Natural killer cell (primary cell): ENCODE measurements at regions of chr1 and their contacts with region 1.

Region 1: DNA sequence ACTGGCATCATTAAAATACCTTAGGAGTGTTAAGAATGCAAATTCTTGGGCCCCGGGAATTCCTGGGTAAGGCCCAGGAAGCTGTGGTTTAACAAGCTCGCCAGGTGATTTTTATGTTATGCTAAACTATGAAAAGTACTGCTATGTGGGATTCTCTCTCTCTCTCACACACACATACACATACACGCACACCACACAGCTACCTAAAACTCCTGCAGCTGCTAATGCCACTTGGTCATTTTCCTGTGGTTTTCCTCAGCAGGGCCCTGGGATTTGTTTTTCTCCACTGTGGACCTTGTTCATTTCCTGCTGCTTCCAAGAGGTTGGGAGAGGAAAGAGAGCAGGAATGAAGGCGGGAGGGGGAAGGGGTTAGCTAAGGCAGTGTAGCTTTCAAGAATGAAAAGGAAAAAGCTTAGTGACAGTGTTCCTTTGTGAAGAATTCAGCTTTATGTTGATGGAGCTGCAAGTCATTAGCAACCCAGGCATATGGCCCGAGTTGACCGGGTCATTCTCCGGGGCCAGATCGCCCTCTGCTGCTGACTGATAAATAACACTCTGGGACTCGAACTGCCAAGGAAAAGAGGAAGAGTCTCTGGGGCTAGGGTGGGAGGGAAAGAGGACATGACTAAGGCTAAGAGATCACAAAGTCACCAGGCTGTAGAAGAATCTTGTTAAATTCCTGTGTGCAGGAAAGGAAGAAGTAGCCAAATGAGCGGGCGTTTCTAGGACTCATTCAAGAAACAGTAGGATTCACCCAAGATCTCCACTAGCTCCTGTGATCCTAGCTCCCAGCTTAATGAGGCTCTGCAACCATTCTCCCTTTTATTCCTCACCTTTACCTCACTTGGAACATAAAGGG is 30.5 kb upstream of the LRIG2 start:
- DNase-seq: peak in 1 of 2 donors; percentile 38
- ATAC-seq: peak; percentile 27 to 61 (median 54)
- H3K4me3 ChIP-seq: no peak overlapping the region
- H3K4me3 Mint-ChIP-seq: no peak overlapping the region
- H3K27ac ChIP-seq: no peak overlapping the region
- H3K27ac Mint-ChIP-seq: peak overlapping the region; percentile 61 to 73
- H3K4me1 ChIP-seq: peaks cover 34% of the 10 kb centered on the region
- H3K4me1 Mint-ChIP-seq: peaks cover 36 to 45% of the 10 kb centered on the region in 2 donors
- H3K27me3 ChIP-seq: no peaks in the 10 kb centered on the region
- H3K27me3 Mint-ChIP-seq: no peaks in the 10 kb centered on the region
- CTCF ChIP-seq: peak; percentile 13

Region 2: GRCh38 chr1:112809253-112809684 is 233.2 kb before region 1 on chr1:
- intact Hi-C with region 1: loop called (anchors 5 kb)
- DNase-seq: peak; percentile 58 to 63
- ATAC-seq: peak; percentile 64 to 92 (median 79)
- H3K4me3 ChIP-seq: no peak overlapping the region
- H3K4me3 Mint-ChIP-seq: no peak overlapping the region
- H3K27ac ChIP-seq: no peak overlapping the region
- H3K27ac Mint-ChIP-seq: no peak overlapping the region
- H3K4me1 ChIP-seq: no peaks in the 10 kb centered on the region
- H3K4me1 Mint-ChIP-seq: peaks cover 0 to 6% of the 10 kb centered on the region in 2 donors
- H3K27me3 ChIP-seq: no peaks in the 10 kb centered on the region
- H3K27me3 Mint-ChIP-seq: peaks cover 7 to 26% of the 10 kb centered on the region in 2 donors
- CTCF ChIP-seq: peak; percentile 79

Region 3: GRCh38 chr1:113534130-113534817 is 491.8 kb after region 1 on chr1:
- intact Hi-C with region 1: no loop called
- DNase-seq: no peak
- ATAC-seq: no peak
- H3K4me3 ChIP-seq: no peak overlapping the region
- H3K4me3 Mint-ChIP-seq: no peak overlapping the region
- H3K27ac ChIP-seq: no peak overlapping the region
- H3K27ac Mint-ChIP-seq: no peak overlapping the region
- H3K4me1 ChIP-seq: no peaks in the 10 kb centered on the region
- H3K4me1 Mint-ChIP-seq: no peaks in the 10 kb centered on the region
- H3K27me3 ChIP-seq: no peaks in the 10 kb centered on the region
- H3K27me3 Mint-ChIP-seq: peaks cover 0 to 10% of the 10 kb centered on the region in 2 donors
- CTCF ChIP-seq: no peak